Activated T-helper 1 cell treated with anti-CD3 and anti-CD28 coated beads, Interleukin-12 subunit alpha, Interleukin-12 subunit beta, Interleukin-2, Interleukin-4 antibody, amounts not matched to agents 30 ng/mL and 10 ng/mL and 1 ng/mL, durations not matched to agents 14 hours and 24 hours and 36 hours (primary cell): ENCODE measurements at regions of chr11 and their contacts with region 1.

Region 1: DNA sequence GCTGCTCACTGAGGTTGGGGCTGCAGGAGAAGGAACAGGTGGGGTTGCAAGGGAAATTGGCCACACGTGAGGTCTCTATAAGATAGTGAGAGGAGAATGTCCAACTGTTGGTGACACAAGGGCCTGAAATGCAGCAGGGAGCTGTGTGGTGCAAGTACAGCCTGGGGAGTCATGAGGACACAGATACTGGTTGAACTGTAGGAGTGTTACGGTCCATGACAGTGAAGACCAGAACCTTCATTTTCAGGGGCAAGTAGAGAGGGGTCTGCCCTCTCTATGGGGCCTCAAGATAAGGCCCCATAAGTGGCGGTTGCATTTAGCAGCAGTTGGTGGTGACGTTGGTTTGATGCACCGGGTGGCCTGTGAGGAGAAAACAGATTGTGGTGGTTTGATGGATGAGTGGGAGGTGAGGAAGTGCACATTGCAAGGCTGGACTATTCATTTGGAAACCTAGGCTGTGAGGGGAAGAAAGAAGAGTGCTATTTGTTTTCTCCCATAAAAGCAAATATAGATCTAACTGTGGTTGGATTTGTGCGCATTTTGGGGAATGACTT is 39.4 kb downstream of the MICAL2 start:
- DNase-seq: peak; percentile 48
- H3K4me3 Mint-ChIP-seq: peak overlapping the region; percentile 43
- H3K27ac Mint-ChIP-seq: peak overlapping the region; percentile 92
- H3K4me1 Mint-ChIP-seq: peaks cover 85% of the 10 kb centered on the region
- H3K27me3 Mint-ChIP-seq: no peaks in the 10 kb centered on the region

Region 2: GRCh38 chr11:11681536-11681935 is 468.2 kb before region 1 on chr11:
- intact Hi-C with region 1: no loop called
- DNase-seq: no peak
- H3K4me3 Mint-ChIP-seq: no peak overlapping the region
- H3K27ac Mint-ChIP-seq: no peak overlapping the region
- H3K4me1 Mint-ChIP-seq: no peaks in the 10 kb centered on the region
- H3K27me3 Mint-ChIP-seq: peaks cover 10% of the 10 kb centered on the region

Region 3: GRCh38 chr11:12087075-12088004 is 62.4 kb before region 1 on chr11:
- intact Hi-C with region 1: loop called (anchors 2 kb)
- DNase-seq: peak; percentile 60
- H3K4me3 Mint-ChIP-seq: peak overlapping the region; percentile 58
- H3K27ac Mint-ChIP-seq: peak overlapping the region; percentile 85
- H3K4me1 Mint-ChIP-seq: peaks cover 75% of the 10 kb centered on the region
- H3K27me3 Mint-ChIP-seq: peaks cover 1% of the 10 kb centered on the region

Region 4: GRCh38 chr11:12137938-12138731 is 11.6 kb before region 1 on chr11:
- intact Hi-C with region 1: loop called (anchors 1 kb)
- DNase-seq: no peak
- H3K4me3 Mint-ChIP-seq: no peak overlapping the region
- H3K27ac Mint-ChIP-seq: peak overlapping the region; percentile 90
- H3K4me1 Mint-ChIP-seq: peaks cover 71% of the 10 kb centered on the region
- H3K27me3 Mint-ChIP-seq: no peaks in the 10 kb centered on the region

Region 5: DNA sequence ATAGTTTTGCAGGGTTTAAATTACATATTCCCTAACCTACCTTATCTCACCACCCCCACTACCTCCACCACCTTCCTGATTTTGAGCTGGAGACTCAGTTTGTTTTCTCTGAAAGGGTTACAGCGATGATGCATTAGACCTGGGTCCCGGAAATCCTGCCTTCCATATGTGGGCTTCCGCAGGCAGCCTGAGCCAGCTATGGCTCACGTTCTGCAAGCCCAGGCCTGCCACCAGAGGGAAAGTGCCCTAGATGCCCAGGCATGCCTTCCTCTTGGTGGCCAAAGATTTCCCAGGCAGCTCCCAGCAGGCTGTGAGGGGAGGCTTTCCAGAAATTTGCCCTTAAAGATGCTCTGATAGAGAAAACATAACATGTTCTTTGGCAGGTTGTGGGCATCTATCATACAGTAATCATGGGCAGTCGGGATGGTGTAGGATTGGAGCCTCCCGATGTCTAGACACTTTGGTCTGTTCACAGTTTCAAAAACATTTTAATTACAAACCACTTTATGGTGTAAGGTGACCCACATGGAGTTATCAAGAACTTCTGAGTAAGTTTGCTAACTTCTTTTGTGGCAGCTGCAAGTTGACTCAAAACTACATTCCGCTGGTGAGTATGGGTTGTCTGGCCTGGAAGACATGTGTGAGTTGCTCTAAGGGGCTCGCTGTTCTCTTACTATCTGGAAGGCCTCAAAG is 39.9 kb after region 1 on chr11:
- intact Hi-C with region 1: loop called (anchors 1 kb)
- DNase-seq: no peak
- H3K4me3 Mint-ChIP-seq: peak overlapping the region; percentile 48
- H3K27ac Mint-ChIP-seq: peak overlapping the region; percentile 80
- H3K4me1 Mint-ChIP-seq: peaks cover 82% of the 10 kb centered on the region
- H3K27me3 Mint-ChIP-seq: no peaks in the 10 kb centered on the region

Region 6: GRCh38 chr11:12213920-12214319 is 64.2 kb after region 1 on chr11:
- intact Hi-C with region 1: no loop called
- DNase-seq: no peak
- H3K4me3 Mint-ChIP-seq: no peak overlapping the region
- H3K27ac Mint-ChIP-seq: peak overlapping the region; percentile 12
- H3K4me1 Mint-ChIP-seq: peaks cover 67% of the 10 kb centered on the region
- H3K27me3 Mint-ChIP-seq: no peaks in the 10 kb centered on the region

Region 7: DNA sequence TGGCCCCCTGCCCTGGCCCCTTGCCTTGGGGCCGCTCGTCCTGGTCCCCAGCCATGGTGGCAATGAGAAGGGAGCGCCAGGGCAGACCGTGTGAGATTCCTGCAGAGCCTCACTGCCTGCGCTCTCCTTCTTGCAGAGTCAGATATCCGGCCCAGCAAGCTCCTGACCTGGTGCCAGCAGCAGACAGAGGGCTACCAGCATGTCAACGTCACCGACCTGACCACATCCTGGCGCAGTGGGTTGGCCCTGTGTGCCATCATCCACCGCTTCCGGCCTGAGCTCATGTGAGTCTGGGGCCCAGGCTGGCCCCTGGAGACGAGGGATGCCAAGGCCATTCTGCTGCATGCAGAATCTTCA is 74.8 kb after region 1 on chr11:
- intact Hi-C with region 1: loop called (anchors 1 kb)
- DNase-seq: peak; percentile 85
- H3K4me3 Mint-ChIP-seq: peak overlapping the region; percentile 68
- H3K27ac Mint-ChIP-seq: peak overlapping the region; percentile 91
- H3K4me1 Mint-ChIP-seq: peaks cover 69% of the 10 kb centered on the region
- H3K27me3 Mint-ChIP-seq: no peaks in the 10 kb centered on the region

Region 8: DNA sequence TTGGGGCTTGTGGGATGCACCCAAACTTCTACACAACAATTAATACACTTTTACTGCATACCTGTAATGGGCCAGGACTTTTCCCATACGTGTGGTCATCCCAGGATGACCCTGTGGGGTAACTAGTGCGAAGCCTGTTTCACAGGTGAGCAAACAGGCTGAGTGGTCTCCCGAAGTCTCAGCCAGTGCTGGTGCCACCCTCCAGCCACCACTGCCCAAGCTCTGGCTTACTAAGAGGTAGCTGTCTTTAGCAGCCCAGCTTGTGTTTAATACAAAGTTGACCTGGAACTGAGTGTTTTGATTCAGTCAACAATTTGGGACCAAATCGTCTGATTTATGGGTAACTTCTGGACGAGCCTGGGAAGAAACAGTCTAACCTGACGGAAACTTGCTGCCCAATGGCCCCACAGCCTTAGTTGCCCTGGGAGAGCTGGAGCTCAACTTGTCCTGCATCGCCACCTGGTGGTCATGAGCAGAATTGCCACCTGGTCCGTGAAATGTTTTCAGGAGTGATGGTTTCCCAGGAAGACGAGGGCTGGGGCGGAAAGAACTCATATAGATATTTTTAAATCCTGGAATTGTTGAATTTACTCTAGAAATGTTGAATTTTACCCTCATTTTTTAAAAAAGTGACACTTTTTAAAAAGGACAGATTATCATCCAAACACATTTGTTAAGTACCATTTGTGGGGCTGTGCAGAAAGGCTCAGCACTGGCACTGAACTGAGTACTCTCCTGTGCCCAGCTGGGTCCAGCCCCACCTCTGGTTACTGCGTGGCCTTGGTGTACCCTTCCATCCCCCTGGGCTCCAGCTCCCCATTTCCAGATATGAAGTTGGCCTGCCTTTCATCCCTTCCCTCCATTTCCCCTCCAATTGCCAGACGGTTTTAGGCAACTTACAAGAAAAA is 132.1 kb after region 1 on chr11:
- intact Hi-C with region 1: loop called (anchors 5 kb)
- DNase-seq: peak; percentile 63
- H3K4me3 Mint-ChIP-seq: no peak overlapping the region
- H3K27ac Mint-ChIP-seq: peak overlapping the region; percentile 20
- H3K4me1 Mint-ChIP-seq: peaks cover 22% of the 10 kb centered on the region
- H3K27me3 Mint-ChIP-seq: no peaks in the 10 kb centered on the region